ENCODE measurements at regions of chr2 and their contacts with region 1.

Region 1: DNA sequence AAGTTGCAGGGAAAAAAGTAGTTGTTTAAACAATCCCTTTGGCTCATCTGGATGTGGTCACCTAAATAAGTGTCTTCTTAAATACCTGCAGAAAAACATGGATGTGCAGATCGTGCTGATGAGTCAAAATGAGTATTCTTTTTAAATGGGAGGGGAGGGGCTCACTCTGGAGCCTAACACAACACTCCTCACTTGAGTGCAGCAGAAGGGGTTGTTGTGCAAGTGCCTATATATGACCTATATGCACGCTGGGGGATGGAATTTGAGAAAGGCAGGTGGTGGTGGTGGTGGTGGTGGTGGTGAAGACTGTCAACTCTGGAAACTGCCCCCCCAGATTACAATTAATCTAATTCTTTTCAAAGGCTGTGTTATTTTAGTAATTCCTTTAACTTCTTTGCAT is 77.9 kb upstream of the FAM124B start:
- DNase-seq: no peak
- H3K4me3 ChIP-seq: no peak overlapping the region
- H3K27ac ChIP-seq: no peak overlapping the region
- H3K4me1 ChIP-seq: peaks cover 23% of the 10 kb centered on the region
- H3K27me3 ChIP-seq: no peaks in the 10 kb centered on the region
- CTCF ChIP-seq: no peak

Region 2: GRCh38 chr2:223944703-223945531 is 534.9 kb before region 1 on chr2 and contains the start of gene WDFY1:
- CTCF ChIA-PET with region 1: no interaction called
- POLR2A ChIA-PET with region 1: interaction called, 14 read pairs
- intact Hi-C with region 1: no loop called
- DNase-seq: peak; percentile 77 to 94
- H3K4me3 ChIP-seq: peak within 1 kb of the TSS; percentile 74
- H3K27ac ChIP-seq: 0 out of 2 replicates have a peak within 1 kb of the TSS, but pooled peaks have one; percentile 1
- H3K4me1 ChIP-seq: peaks cover 42% of the 10 kb centered on the region
- H3K27me3 ChIP-seq: no peaks in the 10 kb centered on the region
- CTCF ChIP-seq: no peak
- total RNA-seq, gene WDFY1: 81.9 and 84.4 TPM in 2 replicates

Region 3: GRCh38 chr2:224401641-224402342 is 78.0 kb before region 1 on chr2 and contains the start of gene FAM124B:
- CTCF ChIA-PET with region 1: no interaction called
- POLR2A ChIA-PET with region 1: no interaction called
- intact Hi-C with region 1: no loop called
- DNase-seq: no peak
- H3K4me3 ChIP-seq: no peak within 1 kb of the TSS
- H3K27ac ChIP-seq: no peak within 1 kb of the TSS
- H3K4me1 ChIP-seq: no peaks in the 10 kb centered on the region
- H3K27me3 ChIP-seq: no peaks in the 10 kb centered on the region
- CTCF ChIP-seq: no peak
- total RNA-seq, gene FAM124B: 0.17 and 0.60 TPM in 2 replicates

Region 4: DNA sequence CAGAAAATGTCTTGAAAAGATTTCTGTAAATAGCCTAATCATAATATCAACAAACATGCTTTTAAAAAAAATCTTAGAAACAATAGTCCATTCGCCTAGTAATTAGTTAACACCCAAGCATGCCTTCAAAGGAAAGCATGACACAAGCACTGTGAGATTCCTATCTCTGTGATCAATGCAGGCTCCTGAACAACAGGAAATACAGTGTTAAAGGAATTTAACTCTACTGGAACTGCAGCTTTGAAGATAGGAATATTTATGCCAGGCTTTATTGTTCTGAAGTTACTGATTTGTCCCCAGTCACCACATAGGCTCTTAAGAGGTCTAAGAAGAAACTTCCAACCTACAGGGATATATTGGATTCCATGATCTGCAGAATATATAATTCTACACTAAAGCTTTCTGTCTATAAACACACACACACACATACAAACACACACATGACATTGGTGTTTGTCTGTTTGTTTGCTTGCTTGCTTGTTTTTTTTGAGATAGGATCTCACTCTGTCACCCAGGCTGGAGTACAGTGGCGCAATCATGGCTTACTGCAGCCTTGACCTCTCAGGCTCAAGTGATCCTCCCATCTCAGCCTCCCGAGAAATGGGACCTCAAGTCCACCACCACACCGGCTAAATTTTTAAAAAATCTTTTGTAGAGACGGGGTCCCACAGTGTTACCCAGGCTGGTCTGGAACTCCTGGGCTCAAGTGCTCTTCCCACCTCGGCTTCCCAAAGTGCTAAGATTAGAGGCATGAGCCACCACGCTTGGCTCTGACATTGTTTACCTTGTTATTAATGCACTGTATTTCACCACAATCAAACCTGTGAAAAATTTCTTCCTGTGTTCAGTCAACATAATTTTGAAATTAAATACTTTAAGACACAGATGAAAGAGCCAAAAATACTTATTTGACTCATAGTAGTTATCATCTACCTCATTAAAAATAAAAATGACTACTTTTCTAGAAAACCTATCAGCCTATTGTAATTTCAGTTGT is 62.2 kb before region 1 on chr2:
- CTCF ChIA-PET with region 1: interaction called, 3 read pairs
- POLR2A ChIA-PET with region 1: no interaction called
- intact Hi-C with region 1: loop called (anchors 1 kb)
- DNase-seq: peak in 1 of 2 experiments; percentile 95
- H3K4me3 ChIP-seq: no peak overlapping the region
- H3K27ac ChIP-seq: peak overlapping the region; percentile 2; the same call in 1 of the 2 replicates
- H3K4me1 ChIP-seq: peaks cover 15% of the 10 kb centered on the region
- H3K27me3 ChIP-seq: no peaks in the 10 kb centered on the region
- CTCF ChIP-seq: no peak

Region 5: GRCh38 chr2:224532931-224533330 is 53.1 kb after region 1 on chr2:
- CTCF ChIA-PET with region 1: no interaction called
- POLR2A ChIA-PET with region 1: interaction called, 10 read pairs
- intact Hi-C with region 1: no loop called
- DNase-seq: no peak
- H3K4me3 ChIP-seq: no peak overlapping the region
- H3K27ac ChIP-seq: no peak overlapping the region; the same call in 1 of the 2 replicates
- H3K4me1 ChIP-seq: no peaks in the 10 kb centered on the region
- H3K27me3 ChIP-seq: no peaks in the 10 kb centered on the region
- CTCF ChIP-seq: no peak

Region 6: GRCh38 chr2:224585205-224586088 is 105.6 kb after region 1 on chr2 and contains the start of gene CUL3:
- CTCF ChIA-PET with region 1: no interaction called
- POLR2A ChIA-PET with region 1: interaction called, 15 read pairs
- intact Hi-C with region 1: loop called (anchors 1 kb)
- DNase-seq: peak; percentile 97 to 100
- H3K4me3 ChIP-seq: peak within 1 kb of the TSS; percentile 67
- H3K27ac ChIP-seq: peak within 1 kb of the TSS; percentile 46
- H3K4me1 ChIP-seq: peaks cover 39% of the 10 kb centered on the region
- H3K27me3 ChIP-seq: no peaks in the 10 kb centered on the region
- CTCF ChIP-seq: no peak
- total RNA-seq, gene CUL3: 155 and 200 TPM in 2 replicates

Region 7: DNA sequence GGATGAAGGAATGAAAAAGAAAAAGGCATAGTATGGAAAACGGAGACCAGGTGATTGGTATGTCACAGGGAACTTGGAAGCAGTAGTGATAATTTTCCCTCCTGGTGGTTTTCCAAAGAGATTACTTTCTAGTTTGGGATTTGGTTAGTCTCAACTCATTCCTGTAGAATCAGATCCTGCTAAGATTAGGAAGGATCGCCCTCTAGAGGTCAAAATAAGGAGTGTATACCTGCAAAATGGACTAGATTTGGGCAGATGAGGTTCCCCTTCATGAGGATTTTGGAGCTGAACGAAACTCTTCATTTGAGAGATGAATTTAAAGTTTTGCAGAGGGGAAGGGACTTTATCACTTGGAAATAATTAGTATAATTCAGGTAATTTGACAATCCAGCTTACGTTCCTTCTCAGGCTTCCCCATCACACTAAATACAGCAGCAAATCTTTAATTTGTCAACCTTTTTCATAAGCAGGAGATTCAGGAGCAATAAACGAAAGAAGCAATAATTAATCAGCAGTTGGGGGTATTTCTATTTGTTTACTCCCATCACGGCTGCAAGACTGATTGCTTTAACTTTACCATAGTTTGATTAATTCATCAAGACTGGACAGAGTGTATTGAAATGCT is 171.1 kb after region 1 on chr2:
- CTCF ChIA-PET with region 1: no interaction called
- POLR2A ChIA-PET with region 1: no interaction called
- intact Hi-C with region 1: loop called (anchors 2 kb)
- DNase-seq: peak; percentile 43 to 75
- H3K4me3 ChIP-seq: no peak overlapping the region
- H3K27ac ChIP-seq: no peak overlapping the region
- H3K4me1 ChIP-seq: peaks cover 6% of the 10 kb centered on the region
- H3K27me3 ChIP-seq: no peaks in the 10 kb centered on the region
- CTCF ChIP-seq: peak; percentile 100

Measured in PC-9 (cell line).